ENCODE measurements at regions of chr13 and their contacts with region 1.

Region 1: GRCh38 chr13:40974460-40975407 is 44.4 kb downstream of the ELF1 start:
- DNase-seq: no peak
- H3K4me3 ChIP-seq: no peak overlapping the region
- H3K27ac ChIP-seq: no peak overlapping the region
- H3K27me3 ChIP-seq: no peaks in the 10 kb centered on the region
- CTCF ChIP-seq: peak; percentile 60

Region 2: DNA sequence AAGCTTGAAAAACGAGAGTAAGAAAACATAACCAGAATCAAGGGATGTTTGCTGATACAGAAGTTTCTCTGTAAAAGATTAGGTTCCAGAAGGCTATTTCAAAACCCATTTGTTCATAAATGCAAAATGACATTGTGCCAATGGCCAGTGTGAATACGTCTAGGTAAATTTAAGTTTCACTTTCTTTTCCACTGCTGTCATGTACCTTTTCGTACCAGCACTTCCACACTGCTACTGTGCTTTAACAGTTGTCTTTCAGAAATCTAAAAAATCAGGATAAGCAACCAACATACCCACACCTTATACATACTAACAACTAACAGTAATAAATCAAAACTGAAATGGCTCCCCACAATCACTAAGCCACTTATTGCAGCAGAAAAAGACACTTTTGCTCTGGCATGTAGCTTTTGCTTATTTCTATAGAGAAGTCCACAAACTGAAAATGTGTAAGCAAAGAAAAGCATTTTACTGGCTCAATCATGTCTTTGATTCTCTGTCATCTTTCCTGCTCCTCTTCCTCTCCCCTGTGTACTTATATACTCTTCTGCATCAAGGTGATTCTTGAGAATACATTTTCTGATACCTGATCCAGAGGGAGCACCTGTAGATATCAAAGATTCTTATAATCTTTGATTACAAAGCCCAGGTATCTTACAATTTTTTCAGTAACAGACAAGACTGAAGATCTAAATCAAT is 10.1 kb after region 1 on chr13:
- CTCF ChIA-PET with region 1: interaction called, 13 read pairs
- POLR2A ChIA-PET with region 1: no interaction called
- DNase-seq: no peak
- H3K4me3 ChIP-seq: no peak overlapping the region
- H3K27ac ChIP-seq: no peak overlapping the region
- H3K27me3 ChIP-seq: no peaks in the 10 kb centered on the region
- CTCF ChIP-seq: no peak

Region 3: GRCh38 chr13:41054212-41054877 is 79.6 kb after region 1 on chr13:
- CTCF ChIA-PET with region 1: interaction called, 17 read pairs
- POLR2A ChIA-PET with region 1: no interaction called
- DNase-seq: no peak
- H3K4me3 ChIP-seq: no peak overlapping the region
- H3K27ac ChIP-seq: no peak overlapping the region
- H3K27me3 ChIP-seq: no peaks in the 10 kb centered on the region
- CTCF ChIP-seq: peak; percentile 53

Measured in AG04450 (cell line).